ENCODE measurements at regions of chr3 and their contacts with region 1.

Region 1: GRCh38 chr3:172476347-172476746 is 28.1 kb upstream of the GHSR start:
- DNase-seq: no peak
- ATAC-seq: no peak
- H3K4me3 ChIP-seq: peak overlapping the region in 3 of 4 donors; percentile 54 to 64 (median 55)
- H3K27ac ChIP-seq: peak overlapping the region in 2 of 4 donors; percentile 55 to 56
- H3K4me1 ChIP-seq: peaks cover 0 to 3% of the 10 kb centered on the region in 2 donors
- H3K27me3 ChIP-seq: no peaks in the 10 kb centered on the region
- CTCF ChIP-seq: no peak
- POLR2A ChIP-seq: no peak

Region 2: DNA sequence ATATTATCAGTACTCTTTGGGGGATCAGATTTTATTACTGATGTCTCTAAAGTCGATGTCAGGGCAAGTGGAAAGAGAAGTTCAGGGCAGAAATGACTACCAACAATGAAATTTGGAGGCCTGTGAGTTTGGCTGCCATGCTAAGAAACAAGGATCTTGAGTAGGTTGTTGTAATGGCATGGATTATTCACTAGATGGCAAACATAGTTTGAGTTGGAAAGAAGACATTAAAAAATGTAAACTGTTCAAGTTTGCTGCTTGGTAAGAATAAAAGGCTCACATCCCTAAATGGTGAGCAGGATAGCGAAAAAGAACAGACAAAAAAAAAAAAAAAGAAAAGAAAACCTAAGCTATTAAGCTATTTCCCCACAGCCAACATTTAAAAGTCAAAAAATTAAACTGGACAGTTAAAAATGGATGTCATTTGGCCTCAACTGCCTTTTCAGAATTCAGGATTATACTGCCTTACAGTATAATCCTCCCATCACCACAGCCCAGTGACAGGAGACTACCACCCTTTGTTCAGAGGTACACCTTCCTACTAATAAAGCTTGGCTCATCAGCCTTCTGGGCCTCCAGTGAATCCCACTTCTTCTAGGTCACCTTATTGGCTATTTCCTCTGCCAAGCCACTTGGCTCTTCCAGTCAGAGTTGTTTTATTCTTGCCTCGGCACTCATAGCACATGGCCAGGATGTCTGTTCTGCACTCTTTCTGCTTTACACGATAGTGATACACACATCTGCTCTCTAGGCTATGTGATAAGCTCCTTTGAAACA is 829.8 kb before region 1 on chr3:
- in situ Hi-C with region 1: no loop called
- intact Hi-C with region 1: loop called (anchors 5 kb)
- DNase-seq: no peak
- ATAC-seq: peak; percentile 55 to 69
- H3K4me3 ChIP-seq: no peak overlapping the region
- H3K27ac ChIP-seq: peak overlapping the region in 2 of 4 donors; percentile 3 to 21
- H3K4me1 ChIP-seq: peaks cover 5 to 6% of the 10 kb centered on the region in 2 donors
- H3K27me3 ChIP-seq: no peaks in the 10 kb centered on the region
- CTCF ChIP-seq: peak; percentile 35 to 68 (median 39)
- POLR2A ChIP-seq: no peak

Region 3: DNA sequence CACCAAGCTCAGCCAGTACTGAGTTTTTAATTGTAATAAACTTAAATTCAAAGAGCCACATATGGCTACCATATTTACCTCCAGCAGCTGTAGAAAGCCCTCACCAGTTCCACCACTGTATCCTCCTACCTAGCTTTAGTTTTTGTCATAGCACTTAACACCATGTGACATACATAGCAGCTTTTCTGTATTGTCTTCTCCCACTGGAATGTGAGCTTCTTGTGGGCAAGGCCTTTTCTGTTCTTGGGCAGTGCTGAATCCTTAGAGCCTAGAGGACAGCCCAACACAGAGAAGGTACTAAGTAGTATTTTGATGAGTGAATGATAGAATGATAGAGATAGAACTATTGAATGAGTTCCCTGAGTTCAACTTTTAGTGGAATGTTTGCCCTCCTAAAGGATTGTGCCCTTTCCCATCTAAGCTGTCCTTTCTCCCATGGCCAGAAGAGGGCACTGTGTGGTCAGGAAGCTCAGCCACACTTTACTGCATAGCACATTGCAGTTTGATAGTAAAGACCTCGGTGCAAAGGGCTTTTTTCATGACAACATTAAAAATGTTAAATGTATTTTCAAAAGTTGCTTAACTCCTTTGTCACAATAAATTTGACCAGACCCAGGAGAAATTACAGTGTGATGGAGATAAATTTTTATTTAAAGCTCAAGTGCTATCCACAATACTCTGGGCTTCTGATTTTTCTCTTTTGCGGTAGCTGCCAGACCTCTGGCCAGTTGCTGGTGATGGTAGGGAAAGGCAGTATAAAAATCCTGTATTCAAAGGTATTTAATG is 143.9 kb before region 1 on chr3:
- in situ Hi-C with region 1: loop called in 2 of 4 experiments (anchors 10 kb)
- intact Hi-C with region 1: loop called (anchors 1 kb)
- DNase-seq: peak in 1 of 2 donors; percentile 48
- ATAC-seq: peak; percentile 68 to 85
- H3K4me3 ChIP-seq: no peak overlapping the region
- H3K27ac ChIP-seq: peak overlapping the region; percentile 10 to 53 (median 31)
- H3K4me1 ChIP-seq: no peaks in the 10 kb centered on the region
- H3K27me3 ChIP-seq: no peaks in the 10 kb centered on the region
- CTCF ChIP-seq: peak; percentile 72 to 90 (median 82)
- POLR2A ChIP-seq: no peak

Region 4: DNA sequence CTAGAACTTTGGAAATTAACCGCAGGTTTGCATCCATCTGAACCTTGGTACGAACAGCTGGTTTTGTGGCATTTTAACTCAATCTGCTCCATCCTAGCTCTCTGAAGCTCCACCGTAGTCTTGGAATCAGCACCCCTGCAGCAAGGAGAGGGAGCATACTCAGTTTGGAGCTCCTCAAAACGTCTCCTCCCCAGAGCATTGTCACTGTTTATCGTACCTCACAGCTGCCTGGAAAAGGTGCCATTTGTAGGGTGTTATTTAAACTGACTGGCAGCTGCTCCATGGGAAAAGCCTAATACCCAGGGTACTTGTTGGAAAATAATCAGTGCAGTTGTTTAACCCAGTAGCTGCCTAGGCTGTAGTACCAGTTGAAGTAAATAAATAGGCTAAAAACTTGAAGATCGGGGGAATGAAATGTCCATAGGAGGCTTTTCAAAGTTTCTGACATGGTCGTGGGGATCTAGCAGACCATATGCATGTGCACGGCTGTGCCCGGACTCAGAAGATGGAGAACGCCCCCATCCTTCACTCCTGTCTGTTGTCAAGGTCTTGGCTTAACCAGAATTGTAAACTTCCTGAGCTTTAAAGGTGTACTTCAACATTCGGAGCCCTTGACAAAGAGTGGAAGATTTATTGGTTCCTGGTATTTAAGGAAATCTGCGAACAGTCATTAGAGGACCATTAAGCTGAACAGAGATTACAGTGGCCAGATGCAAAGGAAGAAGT is 71.9 kb before region 1 on chr3:
- in situ Hi-C with region 1: no loop called
- intact Hi-C with region 1: loop called (anchors 10 kb)
- DNase-seq: no peak
- ATAC-seq: no peak
- H3K4me3 ChIP-seq: no peak overlapping the region
- H3K27ac ChIP-seq: no peak overlapping the region
- H3K4me1 ChIP-seq: no peaks in the 10 kb centered on the region
- H3K27me3 ChIP-seq: no peaks in the 10 kb centered on the region
- CTCF ChIP-seq: no peak
- POLR2A ChIP-seq: no peak

Region 5: DNA sequence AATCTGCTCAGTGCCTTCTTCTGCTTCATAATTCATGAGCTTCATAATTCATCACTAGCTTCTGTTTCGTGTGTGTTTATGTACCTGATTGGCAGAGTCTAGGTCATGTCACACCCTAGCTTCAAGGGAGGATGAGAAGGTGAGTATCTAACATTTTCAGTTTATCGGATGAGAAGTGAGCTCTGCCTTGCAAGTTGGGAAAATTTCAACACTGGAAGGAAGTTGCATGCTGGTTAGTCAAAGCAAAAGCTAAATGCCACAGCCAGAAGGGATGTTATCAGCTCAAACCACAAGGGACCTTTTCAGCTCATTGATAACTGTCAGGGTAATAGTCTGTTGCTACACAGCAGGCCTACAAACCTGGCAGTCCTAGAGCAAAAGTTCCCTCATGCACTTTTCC is 54.2 kb after region 1 on chr3:
- in situ Hi-C with region 1: no loop called
- intact Hi-C with region 1: no loop called
- DNase-seq: no peak
- ATAC-seq: no peak
- H3K4me3 ChIP-seq: no peak overlapping the region
- H3K27ac ChIP-seq: no peak overlapping the region
- H3K4me1 ChIP-seq: no peaks in the 10 kb centered on the region
- H3K27me3 ChIP-seq: no peaks in the 10 kb centered on the region
- CTCF ChIP-seq: no peak
- POLR2A ChIP-seq: no peak

Region 6: GRCh38 chr3:172666873-172667694 is 190.7 kb after region 1 on chr3:
- in situ Hi-C with region 1: loop called in 1 of 4 experiments (anchors 5 kb)
- intact Hi-C with region 1: no loop called
- DNase-seq: peak; percentile 59 to 67
- ATAC-seq: peak; percentile 95 to 97
- H3K4me3 ChIP-seq: no peak overlapping the region
- H3K27ac ChIP-seq: no peak overlapping the region
- H3K4me1 ChIP-seq: peaks cover 0 to 6% of the 10 kb centered on the region in 2 donors
- H3K27me3 ChIP-seq: no peaks in the 10 kb centered on the region
- CTCF ChIP-seq: peak; percentile 80 to 86 (median 84)
- POLR2A ChIP-seq: no peak